ENCODE measurements at regions of chr14 and their contacts with region 1.

Region 1: DNA sequence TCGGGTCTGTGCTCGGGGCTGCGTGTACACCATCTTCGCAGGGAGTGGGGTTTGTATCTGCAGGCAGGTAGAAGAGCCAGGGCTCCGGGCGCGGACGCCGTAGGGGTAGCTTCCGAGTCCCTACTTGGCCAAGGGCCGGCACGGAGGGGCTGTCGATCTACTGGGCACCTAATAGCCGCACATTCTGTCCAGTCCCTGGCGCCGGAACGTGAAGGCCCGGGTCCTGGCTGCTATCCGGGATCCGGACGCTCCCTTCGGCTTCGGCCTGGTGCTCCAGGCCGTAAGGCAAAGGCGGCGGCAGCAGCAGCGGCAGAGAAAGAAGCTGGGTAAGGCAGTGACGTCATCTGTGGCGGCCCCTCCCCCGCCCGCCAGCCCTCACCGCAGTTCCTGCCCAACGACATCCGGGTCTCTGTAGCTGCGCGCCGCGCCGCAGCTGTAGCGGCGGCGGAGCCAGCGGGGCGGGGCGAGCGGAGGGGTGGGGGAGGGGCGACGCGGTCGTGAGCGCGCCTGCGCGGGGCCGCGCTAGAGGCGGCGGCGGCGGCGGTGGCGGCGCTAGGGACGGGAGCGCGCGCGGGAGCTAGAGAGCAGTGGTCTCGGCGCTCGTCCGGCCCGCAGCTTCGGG is at the start of gene PPM1A:
- DNase-seq: peak; percentile 99
- ATAC-seq: peak; percentile 72
- H3K4me3 ChIP-seq: peak within 1 kb of the TSS; percentile 86 to 96 (median 92)
- H3K4me3 Mint-ChIP-seq: peak within 1 kb of the TSS; percentile 99
- H3K27ac ChIP-seq: peak within 1 kb of the TSS; percentile 100
- H3K27ac Mint-ChIP-seq: peak within 1 kb of the TSS; percentile 100
- H3K4me1 ChIP-seq: peaks cover 16 to 24% of the 10 kb centered on the region in 2 donors
- H3K4me1 Mint-ChIP-seq: peaks cover 47% of the 10 kb centered on the region
- H3K27me3 ChIP-seq: no peaks in the 10 kb centered on the region
- H3K27me3 Mint-ChIP-seq: no peaks in the 10 kb centered on the region
- CTCF ChIP-seq: no peak
- total RNA-seq, gene PPM1A: 49.3 and 59.0 TPM in 2 replicates

Region 2: DNA sequence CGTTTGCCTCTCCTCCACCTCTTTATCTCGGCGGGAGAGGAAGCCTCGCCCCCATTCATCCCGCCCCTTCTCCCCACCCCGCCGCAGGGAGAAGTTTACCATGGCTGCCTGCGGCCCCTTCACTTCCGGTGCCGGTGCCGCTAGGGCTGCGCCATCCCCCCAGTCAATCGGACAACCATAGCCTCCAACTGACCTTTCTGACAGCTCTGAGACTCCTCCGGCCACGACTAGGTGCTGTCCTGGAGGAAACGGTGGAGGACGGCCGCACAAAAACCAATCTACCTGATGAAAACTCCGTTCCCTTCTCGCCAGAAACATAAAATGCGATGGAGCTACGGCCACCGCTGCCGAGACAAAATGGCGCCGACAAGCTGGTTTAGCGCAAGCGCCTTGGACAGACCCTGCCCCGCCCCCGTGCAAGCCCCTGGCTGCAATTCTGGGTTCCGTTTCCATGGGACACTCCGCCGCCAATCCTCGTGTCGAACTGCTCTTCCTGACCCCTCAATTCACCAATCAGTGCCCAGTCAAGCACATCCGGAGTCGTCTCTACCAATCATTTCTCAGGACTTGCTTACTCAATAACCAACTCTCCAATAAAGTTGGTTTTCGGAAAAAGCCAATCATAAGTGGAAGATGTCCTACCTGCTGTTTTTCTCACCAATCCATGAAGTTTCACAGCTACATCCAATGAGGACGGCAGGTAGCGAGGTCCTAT is 1950.9 kb before region 1 on chr14:
- CTCF ChIA-PET with region 1: no interaction called
- POLR2A ChIA-PET with region 1: no interaction called
- intact Hi-C with region 1: loop called (anchors 5 kb)
- DNase-seq: peak; percentile 99
- ATAC-seq: peak; percentile 80
- H3K4me3 ChIP-seq: peak overlapping the region; percentile 85 to 98 (median 91)
- H3K4me3 Mint-ChIP-seq: no peak overlapping the region
- H3K27ac ChIP-seq: peak overlapping the region; percentile 96 to 98
- H3K27ac Mint-ChIP-seq: no peak overlapping the region
- H3K4me1 ChIP-seq: peaks cover 21 to 33% of the 10 kb centered on the region in 2 donors
- H3K4me1 Mint-ChIP-seq: peaks cover 43% of the 10 kb centered on the region
- H3K27me3 ChIP-seq: no peaks in the 10 kb centered on the region
- H3K27me3 Mint-ChIP-seq: no peaks in the 10 kb centered on the region
- CTCF ChIP-seq: no peak

Region 3: DNA sequence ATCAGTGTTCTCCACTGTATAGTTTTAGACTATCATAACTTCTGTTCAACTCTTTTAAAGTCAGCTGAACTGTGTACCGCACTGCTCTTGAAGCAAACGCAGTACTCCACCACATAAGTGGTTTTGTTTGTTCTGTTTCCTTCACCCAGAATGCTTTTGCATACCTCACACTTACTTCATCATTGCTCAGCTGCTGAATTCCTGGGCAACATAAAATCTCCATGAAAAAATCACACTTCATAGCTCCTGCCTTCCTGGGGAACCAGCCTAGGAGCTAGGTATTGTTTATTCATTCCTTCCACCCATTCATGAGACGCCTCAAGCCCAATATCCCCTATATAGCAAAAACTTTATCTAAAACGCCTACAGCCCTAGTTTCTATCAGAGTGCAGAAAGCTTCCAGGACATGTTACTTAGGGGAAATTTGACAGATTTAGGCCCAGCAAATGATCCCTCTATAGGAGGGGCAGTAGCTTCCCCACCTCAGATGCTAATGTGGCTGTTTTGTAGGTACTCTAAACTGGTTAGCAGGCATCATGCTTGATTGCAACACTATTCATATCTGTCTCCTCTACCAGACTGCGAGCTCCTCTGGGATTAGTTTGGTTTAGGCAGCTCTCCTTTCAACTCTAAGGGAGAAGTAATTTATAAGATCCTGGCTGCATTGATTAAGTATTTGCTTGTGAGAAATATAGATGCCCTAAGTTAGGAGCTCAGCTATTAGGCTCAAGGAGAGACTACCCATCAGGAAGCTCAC is 284.4 kb before region 1 on chr14:
- CTCF ChIA-PET with region 1: interaction called, 6 read pairs
- POLR2A ChIA-PET with region 1: no interaction called
- intact Hi-C with region 1: loop called (anchors 1 kb)
- DNase-seq: no peak
- ATAC-seq: peak; percentile 11
- H3K4me3 ChIP-seq: peak overlapping the region in 3 of 5 experiments; percentile 18 to 63 (median 55)
- H3K4me3 Mint-ChIP-seq: peak overlapping the region; percentile 86
- H3K27ac ChIP-seq: peak overlapping the region; percentile 86
- H3K27ac Mint-ChIP-seq: peak overlapping the region; percentile 88
- H3K4me1 ChIP-seq: peaks cover 10 to 15% of the 10 kb centered on the region in 2 donors
- H3K4me1 Mint-ChIP-seq: peaks cover 13% of the 10 kb centered on the region
- H3K27me3 ChIP-seq: no peaks in the 10 kb centered on the region
- H3K27me3 Mint-ChIP-seq: no peaks in the 10 kb centered on the region
- CTCF ChIP-seq: no peak

Region 4: GRCh38 chr14:60164712-60165546 is 83.9 kb before region 1 on chr14 and contains the start of gene DHRS7:
- CTCF ChIA-PET with region 1: interaction called, 9 read pairs
- POLR2A ChIA-PET with region 1: interaction called, 10 read pairs
- intact Hi-C with region 1: loop called (anchors 2 kb)
- DNase-seq: peak; percentile 84
- ATAC-seq: peak; percentile 91
- H3K4me3 ChIP-seq: peak within 1 kb of the TSS; percentile 81 to 93 (median 87)
- H3K4me3 Mint-ChIP-seq: peak within 1 kb of the TSS; percentile 95
- H3K27ac ChIP-seq: peak within 1 kb of the TSS; percentile 87 to 93
- H3K27ac Mint-ChIP-seq: peak within 1 kb of the TSS; percentile 99
- H3K4me1 ChIP-seq: peaks cover 20 to 21% of the 10 kb centered on the region in 2 donors
- H3K4me1 Mint-ChIP-seq: peaks cover 43% of the 10 kb centered on the region
- H3K27me3 ChIP-seq: no peaks in the 10 kb centered on the region
- H3K27me3 Mint-ChIP-seq: no peaks in the 10 kb centered on the region
- CTCF ChIP-seq: peak; percentile 11
- total RNA-seq, gene DHRS7: 44.7 and 47.5 TPM in 2 replicates

Region 5: DNA sequence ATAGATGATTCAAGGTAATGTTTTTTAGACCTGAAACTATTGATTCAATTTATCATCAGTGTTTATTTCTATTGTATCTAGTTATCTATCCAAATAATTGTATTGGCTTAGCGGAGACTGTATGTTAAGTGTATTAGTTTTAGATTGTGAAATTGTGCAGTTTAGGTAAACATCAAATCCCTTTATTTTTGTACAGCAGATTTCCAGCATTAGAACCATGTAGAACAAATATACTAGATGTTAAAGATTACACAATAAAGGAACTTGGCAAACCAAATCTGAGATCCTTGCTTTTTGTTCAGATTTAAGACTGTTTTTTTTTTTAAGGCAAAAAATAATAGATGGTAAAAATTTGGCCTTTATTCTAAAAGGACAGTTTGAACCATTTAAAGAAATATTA is 39.5 kb after region 1 on chr14:
- CTCF ChIA-PET with region 1: no interaction called
- POLR2A ChIA-PET with region 1: no interaction called
- intact Hi-C with region 1: loop called (anchors 5 kb)
- DNase-seq: no peak
- ATAC-seq: no peak
- H3K4me3 ChIP-seq: no peak overlapping the region
- H3K4me3 Mint-ChIP-seq: no peak overlapping the region
- H3K27ac ChIP-seq: no peak overlapping the region
- H3K27ac Mint-ChIP-seq: no peak overlapping the region
- H3K4me1 ChIP-seq: no peaks in the 10 kb centered on the region
- H3K4me1 Mint-ChIP-seq: no peaks in the 10 kb centered on the region
- H3K27me3 ChIP-seq: no peaks in the 10 kb centered on the region
- H3K27me3 Mint-ChIP-seq: no peaks in the 10 kb centered on the region
- CTCF ChIP-seq: no peak

Region 6: DNA sequence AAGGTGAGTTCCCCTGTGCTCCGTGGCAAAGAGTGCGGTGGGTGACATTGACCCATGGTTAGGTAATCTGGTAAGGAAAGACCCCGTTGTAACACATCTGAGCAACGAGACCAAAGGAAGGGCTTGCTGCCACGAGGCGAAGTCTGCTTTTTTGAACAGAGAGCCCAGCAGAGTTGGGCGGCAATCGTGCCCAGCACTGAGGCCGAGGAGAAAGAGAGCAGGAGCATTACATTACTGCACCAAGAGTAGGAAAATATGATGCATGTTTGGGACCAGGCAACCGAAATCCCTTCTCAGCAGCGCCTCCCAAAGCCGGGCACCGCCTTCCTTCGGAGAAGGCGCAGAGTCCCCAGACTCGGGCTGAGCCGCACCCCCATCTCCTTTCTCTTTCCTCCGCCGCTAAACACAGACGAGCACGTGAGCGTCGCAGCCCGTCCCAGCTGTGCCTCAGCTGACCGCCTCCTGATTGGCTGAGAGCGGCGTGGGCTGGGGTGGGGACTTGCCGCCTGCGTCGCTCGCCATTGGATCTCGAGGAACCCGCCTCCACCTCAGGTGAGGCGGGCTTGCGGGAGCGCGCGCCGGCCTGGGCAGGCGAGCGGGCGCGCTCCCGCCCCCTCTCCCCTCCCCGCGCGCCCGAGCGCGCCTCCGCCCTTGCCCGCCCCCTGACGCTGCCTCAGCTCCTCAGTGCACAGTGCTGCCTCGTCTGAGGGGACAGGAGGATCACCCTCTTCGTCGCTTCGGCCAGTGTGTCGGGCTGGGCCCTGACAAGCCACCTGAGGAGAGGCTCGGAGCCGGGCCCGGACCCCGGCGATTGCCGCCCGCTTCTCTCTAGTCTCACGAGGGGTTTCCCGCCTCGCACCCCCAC is 1446.3 kb after region 1 on chr14 and contains the start of gene HIF1A:
- CTCF ChIA-PET with region 1: no interaction called
- POLR2A ChIA-PET with region 1: no interaction called
- intact Hi-C with region 1: loop called (anchors 5 kb)
- DNase-seq: peak; percentile 99
- ATAC-seq: peak; percentile 94
- H3K4me3 ChIP-seq: peak within 1 kb of the TSS; percentile 92 to 98 (median 94)
- H3K4me3 Mint-ChIP-seq: peak within 1 kb of the TSS; percentile 97
- H3K27ac ChIP-seq: peak within 1 kb of the TSS; percentile 92 to 94
- H3K27ac Mint-ChIP-seq: peak within 1 kb of the TSS; percentile 97
- H3K4me1 ChIP-seq: peaks cover 20 to 35% of the 10 kb centered on the region in 2 donors
- H3K4me1 Mint-ChIP-seq: peaks cover 35% of the 10 kb centered on the region
- H3K27me3 ChIP-seq: no peaks in the 10 kb centered on the region
- H3K27me3 Mint-ChIP-seq: no peaks in the 10 kb centered on the region
- CTCF ChIP-seq: no peak
- total RNA-seq, gene HIF1A: 261 and 264 TPM in 2 replicates